Dorsolateral prefrontal cortex (tissue), 120 donors: ENCODE measurements at regions of chr5 and their contacts with region 1.

Region 1: DNA sequence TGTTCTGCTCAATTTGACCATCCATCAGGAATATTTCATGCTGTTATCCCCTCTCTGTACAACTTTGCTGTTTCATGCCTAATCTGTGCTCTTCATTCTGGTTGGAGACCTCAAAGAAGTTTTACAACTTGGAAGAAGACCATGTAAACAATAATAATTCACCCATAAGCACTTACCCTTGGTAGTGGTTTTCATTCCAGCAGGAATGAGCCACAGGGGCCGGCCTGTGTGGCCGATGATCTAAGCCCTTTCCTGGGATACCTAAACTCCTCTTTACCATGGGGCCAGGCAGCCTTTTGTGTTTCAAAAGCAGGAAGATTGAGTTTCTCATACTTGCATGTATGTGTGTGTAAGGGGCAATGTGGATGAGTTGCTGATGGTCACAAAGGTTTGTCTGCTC is 165.0 kb downstream of the FGF1 start:
- DNase-seq: no peak
- H3K4me3 ChIP-seq: no peak overlapping the region
- H3K27ac ChIP-seq: no peak overlapping the region
- H3K27me3 ChIP-seq: no peaks in the 10 kb centered on the region
- CTCF ChIP-seq: no peak

Region 2: DNA sequence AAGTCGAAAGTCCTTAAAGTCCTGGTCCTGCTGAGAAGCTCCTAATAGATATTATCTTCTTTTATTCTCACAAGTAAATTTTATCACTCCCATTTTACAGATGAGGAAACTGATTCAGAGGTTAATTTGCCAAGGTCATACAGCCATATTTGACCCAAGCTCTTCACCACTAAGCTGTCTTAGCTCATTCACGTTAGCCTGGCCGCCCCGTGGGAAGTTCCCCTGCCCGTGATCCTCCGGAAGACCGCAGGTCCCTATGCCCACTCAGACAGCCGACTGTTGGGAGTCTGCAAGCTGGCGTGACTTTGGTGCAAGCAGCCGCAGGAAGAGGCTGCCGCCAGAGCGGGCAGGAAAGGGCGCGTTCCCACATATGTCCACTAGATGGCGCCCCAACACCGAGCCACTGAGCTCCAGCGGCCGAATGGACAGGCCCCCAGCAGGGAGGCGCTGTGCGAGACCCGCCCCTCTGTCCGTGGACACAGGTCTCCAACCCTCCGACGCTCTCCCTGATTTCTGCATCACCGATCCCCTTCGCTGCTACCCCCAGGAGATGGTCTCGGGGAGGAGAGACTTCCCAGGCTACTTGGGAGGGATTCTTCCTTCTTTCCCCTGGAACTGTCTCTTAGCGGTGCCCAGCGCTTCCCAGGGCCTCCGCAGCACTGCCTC is 828.9 kb before region 1 on chr5:
- intact Hi-C with region 1: loop called in 1 of 2 experiments (anchors 5 kb)
- DNase-seq: peak; percentile 82 to 92 (median 88)
- H3K4me3 ChIP-seq: peak overlapping the region in 57 of 59 donors; percentile 8 to 67 (median 47)
- H3K27ac ChIP-seq: peak overlapping the region in 48 of 59 donors; percentile 1 to 88 (median 72)
- H3K27me3 ChIP-seq: no peaks in the 10 kb centered on the region
- CTCF ChIP-seq: peak; percentile 94 to 100 (median 100)